A673 (cell line): ENCODE measurements at regions of chr2 and their contacts with region 1.

Region 1: GRCh38 chr2:38201784-38202183 is 125.8 kb upstream of the CYP1B1 start:
- DNase-seq: no peak
- H3K4me3 ChIP-seq: no peak overlapping the region
- H3K27ac ChIP-seq: no peak overlapping the region
- H3K4me1 ChIP-seq: no peaks in the 10 kb centered on the region
- H3K27me3 ChIP-seq: no peaks in the 10 kb centered on the region
- CTCF ChIP-seq: no peak

Region 2: GRCh38 chr2:39368846-39369245 is 1167.1 kb after region 1 on chr2:
- CTCF ChIA-PET with region 1: no interaction called
- POLR2A ChIA-PET with region 1: interaction called, 14 read pairs
- intact Hi-C with region 1: no loop called
- DNase-seq: no peak
- H3K4me3 ChIP-seq: no peak overlapping the region
- H3K27ac ChIP-seq: no peak overlapping the region
- H3K4me1 ChIP-seq: peaks cover 3% of the 10 kb centered on the region
- H3K27me3 ChIP-seq: no peaks in the 10 kb centered on the region
- CTCF ChIP-seq: no peak